ENCODE measurements at regions of chr14 and their contacts with region 1.

Region 1: DNA sequence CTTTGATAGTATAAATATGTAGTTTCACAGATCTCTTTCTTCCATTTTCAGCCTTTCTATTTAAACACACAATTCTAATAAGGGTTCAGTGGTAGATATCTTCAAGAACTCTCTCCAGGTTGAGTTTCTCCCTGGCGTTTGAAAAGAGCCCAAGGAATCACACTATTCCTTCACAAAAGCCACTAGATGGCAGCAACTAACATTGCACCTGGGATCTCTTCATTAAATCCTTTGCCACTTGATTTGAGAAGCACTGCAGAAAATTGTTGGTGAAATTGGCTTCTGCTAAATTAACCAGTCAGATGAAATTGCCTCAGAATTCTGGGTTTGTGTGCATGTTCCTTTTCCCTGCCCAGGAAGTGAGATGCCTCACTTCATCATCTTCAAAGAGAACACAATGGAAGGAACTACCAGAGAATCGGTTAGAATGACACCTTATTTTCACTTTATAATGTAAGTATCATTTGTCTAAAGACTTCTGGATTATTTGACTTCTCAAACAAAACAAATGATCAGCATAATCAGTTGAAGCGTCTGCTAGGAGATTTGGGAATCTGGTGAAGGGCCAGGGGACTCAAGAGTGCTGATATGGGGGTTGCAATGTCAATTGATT is 6.8 kb downstream of the CCDC198 start:
- DNase-seq: no peak
- H3K4me3 ChIP-seq: no peak overlapping the region
- H3K27ac ChIP-seq: no peak overlapping the region
- H3K4me1 ChIP-seq: no peaks in the 10 kb centered on the region
- H3K27me3 ChIP-seq: no peaks in the 10 kb centered on the region
- CTCF ChIP-seq: peak; percentile 24 to 51 (median 39)
- EP300 ChIP-seq: no peak
- POLR2A ChIP-seq: no peak

Region 2: DNA sequence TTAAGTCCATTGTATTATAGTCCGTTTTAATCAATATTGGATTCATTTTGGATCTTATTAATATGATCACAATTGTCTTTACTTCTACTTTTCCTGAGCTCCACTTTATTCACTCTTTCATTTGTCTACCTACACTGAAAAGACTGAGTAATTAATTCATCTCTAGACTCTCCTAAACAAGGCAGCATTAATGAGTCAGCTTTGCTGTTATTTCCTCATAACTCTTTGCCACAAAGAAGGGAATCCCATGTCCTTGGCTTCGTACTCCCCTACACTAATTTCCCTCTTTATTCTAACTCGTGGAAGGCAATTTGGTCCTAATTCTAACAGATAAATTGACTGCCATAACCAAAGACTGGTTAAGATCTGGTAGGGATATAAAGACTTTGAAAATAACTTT is 573.2 kb after region 1 on chr14:
- in situ Hi-C with region 1: loop called (anchors 10 to 25 kb)
- intact Hi-C with region 1: no loop called
- DNase-seq: no peak
- H3K4me3 ChIP-seq: no peak overlapping the region
- H3K27ac ChIP-seq: no peak overlapping the region
- H3K4me1 ChIP-seq: no peaks in the 10 kb centered on the region
- H3K27me3 ChIP-seq: no peaks in the 10 kb centered on the region
- CTCF ChIP-seq: no peak
- EP300 ChIP-seq: no peak
- POLR2A ChIP-seq: no peak

Region 3: DNA sequence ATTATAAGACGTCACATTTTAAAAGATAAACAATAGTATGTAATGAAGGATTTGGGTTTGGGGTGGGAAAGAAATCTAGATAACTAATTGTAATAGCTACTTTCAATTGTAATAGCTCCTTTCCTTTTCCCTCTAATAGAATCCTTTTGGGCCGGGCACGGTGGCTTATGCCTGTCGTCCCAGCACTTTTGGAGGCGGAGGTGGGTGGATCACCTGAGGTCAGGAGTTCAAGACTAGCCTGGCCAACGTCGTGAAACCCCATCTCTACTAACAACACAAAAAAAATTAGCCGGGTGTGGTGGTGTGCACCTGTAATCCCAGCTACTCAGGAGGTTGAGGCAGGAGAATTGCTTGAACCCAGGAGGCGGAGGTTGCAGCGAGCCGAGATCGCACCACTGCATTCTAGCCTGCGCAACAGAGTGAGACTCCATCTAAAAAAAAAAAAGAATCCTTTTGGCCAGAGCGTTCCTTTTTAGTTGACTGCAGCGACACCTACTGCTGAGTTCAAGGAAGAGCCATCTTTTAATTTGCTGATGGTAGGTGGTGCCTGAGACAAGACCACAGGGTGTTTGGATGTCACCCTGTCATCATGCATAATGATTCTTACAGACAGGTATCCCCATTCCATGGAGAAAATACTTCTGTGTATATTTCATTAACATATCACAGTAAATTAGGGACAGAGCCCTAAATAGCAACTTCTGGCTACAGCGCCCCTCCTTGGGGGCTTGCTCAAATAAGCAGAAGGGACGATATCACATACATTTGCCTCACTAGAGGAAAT is 585.6 kb after region 1 on chr14:
- in situ Hi-C with region 1: loop called (anchors 10 to 25 kb)
- intact Hi-C with region 1: loop called (anchors 10 kb)
- DNase-seq: peak; percentile 41
- H3K4me3 ChIP-seq: no peak overlapping the region
- H3K27ac ChIP-seq: no peak overlapping the region
- H3K4me1 ChIP-seq: no peaks in the 10 kb centered on the region
- H3K27me3 ChIP-seq: no peaks in the 10 kb centered on the region
- CTCF ChIP-seq: peak; percentile 45 to 68 (median 63)
- EP300 ChIP-seq: no peak
- POLR2A ChIP-seq: no peak

Measured in transverse colon (tissue), 4 donors.